ENCODE measurements at regions of chr16 and their contacts with region 1.

Region 1: DNA sequence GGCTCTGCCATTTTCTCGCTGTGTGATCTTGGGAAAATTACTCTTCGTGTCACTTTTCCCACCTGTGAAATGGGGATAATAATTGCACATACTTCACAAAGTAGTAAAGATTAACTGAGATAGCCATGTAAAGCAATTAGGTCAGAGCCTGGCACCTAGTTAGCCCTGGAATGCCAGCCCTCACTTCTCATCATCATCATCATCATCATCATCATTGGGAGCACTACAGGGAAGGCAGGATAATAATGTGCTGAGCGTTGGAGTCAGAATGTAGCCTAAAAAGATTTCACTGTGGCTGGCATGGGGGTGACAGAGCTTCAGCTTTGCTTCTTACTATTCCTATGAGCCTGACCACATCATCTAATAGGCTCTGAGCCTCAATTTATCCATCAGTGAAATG is 362.6 kb downstream of the TOX3 start:
- DNase-seq: no peak
- H3K4me3 ChIP-seq: no peak overlapping the region
- H3K27ac ChIP-seq: no peak overlapping the region
- H3K4me1 ChIP-seq: no peaks in the 10 kb centered on the region
- H3K27me3 ChIP-seq: no peaks in the 10 kb centered on the region
- CTCF ChIP-seq: no peak
- EP300 ChIP-seq: no peak
- POLR2A ChIP-seq: no peak

Region 2: DNA sequence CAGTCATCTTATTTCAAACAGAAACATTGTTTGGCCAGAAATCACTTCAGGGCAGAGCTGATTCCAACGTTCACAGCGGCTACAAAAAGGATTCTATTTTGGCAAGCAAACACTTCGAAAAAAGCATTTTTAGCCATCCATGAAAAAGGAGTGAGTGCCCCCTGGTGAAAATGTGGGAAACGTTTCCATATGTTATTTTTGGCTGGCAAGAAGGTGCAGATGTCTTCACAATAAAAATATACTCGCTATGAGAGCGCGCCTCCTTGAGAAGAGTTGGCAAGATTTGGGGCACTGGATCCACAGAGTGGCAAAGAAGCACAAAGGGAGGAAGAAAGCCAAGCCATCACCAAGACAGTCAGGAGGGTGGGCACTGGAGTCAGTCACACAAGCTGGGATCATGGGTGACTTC is 677.3 kb after region 1 on chr16:
- in situ Hi-C with region 1: loop called in 1 of 4 experiments (anchors 10 kb)
- intact Hi-C with region 1: no loop called
- DNase-seq: peak; percentile 22
- H3K4me3 ChIP-seq: no peak overlapping the region
- H3K27ac ChIP-seq: no peak overlapping the region
- H3K4me1 ChIP-seq: no peaks in the 10 kb centered on the region
- H3K27me3 ChIP-seq: no peaks in the 10 kb centered on the region
- CTCF ChIP-seq: peak; percentile 24 to 57 (median 37)
- EP300 ChIP-seq: no peak
- POLR2A ChIP-seq: no peak

Region 3: GRCh38 chr16:53014287-53014686 is 830.0 kb after region 1 on chr16:
- in situ Hi-C with region 1: loop called in 2 of 4 experiments (anchors 10 to 25 kb)
- intact Hi-C with region 1: no loop called
- DNase-seq: no peak
- H3K4me3 ChIP-seq: no peak overlapping the region
- H3K27ac ChIP-seq: no peak overlapping the region
- H3K4me1 ChIP-seq: no peaks in the 10 kb centered on the region
- H3K27me3 ChIP-seq: peaks cover 13% of the 10 kb centered on the region
- CTCF ChIP-seq: no peak
- EP300 ChIP-seq: no peak
- POLR2A ChIP-seq: no peak

Measured in transverse colon (tissue), 4 donors.